Posterior vena cava (tissue), 2 donors: ENCODE measurements at regions of chr11 and their contacts with region 1.

Region 1: DNA sequence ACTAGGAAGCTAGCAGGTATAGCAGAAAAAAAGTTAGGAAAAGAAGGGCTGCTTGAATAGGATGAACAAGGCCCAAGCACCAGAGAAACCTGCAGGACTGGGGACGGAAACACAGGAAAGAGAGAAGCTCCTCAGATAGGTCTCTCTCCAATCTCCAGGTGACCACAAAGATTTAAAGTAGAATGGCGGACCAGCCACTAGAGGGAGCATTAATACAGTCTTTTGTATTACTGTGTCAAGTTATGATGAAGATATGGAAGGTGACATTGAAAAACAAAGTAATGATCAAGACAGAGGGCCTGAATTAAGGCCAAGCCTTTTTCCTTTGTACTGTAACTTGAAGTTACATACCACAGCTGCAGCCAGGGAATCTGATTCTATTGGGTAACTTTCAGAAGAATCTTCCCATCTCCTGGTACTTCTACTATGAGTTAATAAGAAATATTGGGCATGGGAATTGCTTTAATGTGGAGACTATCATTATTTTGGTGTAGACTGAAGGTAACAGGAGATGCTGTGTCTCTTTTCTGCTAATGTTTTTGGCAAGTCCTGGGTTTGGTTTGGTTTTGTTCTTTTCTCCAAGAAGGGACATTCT is 33.8 kb downstream of the OR2AG2 start:
- DNase-seq: no peak

Region 2: GRCh38 chr11:6234387-6235107 is 503.4 kb before region 1 on chr11 and contains the start of gene FHIP1B:
- intact Hi-C with region 1: loop called in 1 of 2 experiments (anchors 10 kb)
- DNase-seq: peak; percentile 100
- total RNA-seq, gene FHIP1B: 20.5 to 20.6 TPM

Region 3: GRCh38 chr11:6693342-6694228 is 44.4 kb before region 1 on chr11:
- intact Hi-C with region 1: no loop called
- DNase-seq: no peak